Endothelial cell of umbilical vein (primary cell): ENCODE measurements at regions of chr1 and their contacts with region 1.

Region 1: DNA sequence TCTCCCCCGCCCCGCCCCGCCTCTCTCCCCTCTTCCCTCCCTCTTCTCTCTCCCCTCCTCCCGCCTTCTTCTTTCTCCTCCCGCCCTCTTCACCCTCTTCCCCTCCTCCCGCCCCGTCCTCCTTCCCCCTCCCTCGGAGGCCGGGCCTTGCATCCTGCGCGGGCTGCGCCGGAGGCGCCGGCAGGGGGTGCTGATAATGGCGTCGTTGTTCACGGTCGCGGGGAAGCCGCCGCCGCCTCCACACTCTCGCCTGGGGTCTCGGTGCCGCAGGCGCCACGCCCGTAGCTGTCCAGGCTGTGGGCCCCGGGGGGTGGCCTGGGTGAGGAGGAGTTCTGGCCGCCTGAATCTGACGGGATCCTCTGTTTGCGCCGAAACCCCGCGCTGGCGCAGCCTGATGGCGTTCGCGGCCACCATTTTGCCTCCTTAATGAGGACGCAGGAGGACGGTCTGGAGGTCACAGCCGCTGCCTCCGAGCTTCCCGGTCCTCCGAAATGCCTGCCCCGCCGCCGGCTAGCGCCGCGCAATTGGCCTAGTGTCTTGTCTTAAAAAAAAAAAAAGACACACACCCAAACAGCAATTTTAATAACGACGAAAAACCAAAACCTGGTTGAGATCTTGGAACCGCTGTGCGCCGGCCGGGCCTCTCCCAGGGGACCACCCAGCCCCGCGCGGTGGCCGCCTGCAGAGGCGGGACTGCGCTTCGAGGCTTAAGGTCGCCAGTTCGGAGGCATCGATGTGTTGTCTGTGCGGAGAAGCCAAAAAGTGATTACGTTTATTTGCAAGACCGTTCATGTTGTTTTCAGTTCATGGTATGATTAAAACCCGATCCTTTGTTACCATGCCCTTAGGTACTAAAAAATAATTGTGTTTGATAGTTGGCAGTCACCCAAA is 106.6 kb upstream of the HNRNPU start:
- DNase-seq: peak; percentile 94
- H3K4me3 ChIP-seq: peak overlapping the region; percentile 37 to 86 (median 80)
- H3K27ac ChIP-seq: peak overlapping the region; percentile 96
- H3K4me1 ChIP-seq: peaks cover 15% of the 10 kb centered on the region
- H3K27me3 ChIP-seq: no peaks in the 10 kb centered on the region
- CTCF ChIP-seq: peak; percentile 47 to 77
- POLR2A ChIP-seq: peak; percentile 86

Region 2: GRCh38 chr1:244896550-244896949 is 74.4 kb before region 1 on chr1:
- CTCF ChIA-PET with region 1: no interaction called
- POLR2A ChIA-PET with region 1: no interaction called
- dilution Hi-C with region 1: no loop called
- intact Hi-C with region 1: loop called (anchors 2 kb)
- DNase-seq: peak; percentile 86
- H3K4me3 ChIP-seq: no peak overlapping the region
- H3K27ac ChIP-seq: peak overlapping the region; percentile 57
- H3K4me1 ChIP-seq: peaks cover 6% of the 10 kb centered on the region
- H3K27me3 ChIP-seq: no peaks in the 10 kb centered on the region
- CTCF ChIP-seq: no peak
- POLR2A ChIP-seq: no peak

Region 3: DNA sequence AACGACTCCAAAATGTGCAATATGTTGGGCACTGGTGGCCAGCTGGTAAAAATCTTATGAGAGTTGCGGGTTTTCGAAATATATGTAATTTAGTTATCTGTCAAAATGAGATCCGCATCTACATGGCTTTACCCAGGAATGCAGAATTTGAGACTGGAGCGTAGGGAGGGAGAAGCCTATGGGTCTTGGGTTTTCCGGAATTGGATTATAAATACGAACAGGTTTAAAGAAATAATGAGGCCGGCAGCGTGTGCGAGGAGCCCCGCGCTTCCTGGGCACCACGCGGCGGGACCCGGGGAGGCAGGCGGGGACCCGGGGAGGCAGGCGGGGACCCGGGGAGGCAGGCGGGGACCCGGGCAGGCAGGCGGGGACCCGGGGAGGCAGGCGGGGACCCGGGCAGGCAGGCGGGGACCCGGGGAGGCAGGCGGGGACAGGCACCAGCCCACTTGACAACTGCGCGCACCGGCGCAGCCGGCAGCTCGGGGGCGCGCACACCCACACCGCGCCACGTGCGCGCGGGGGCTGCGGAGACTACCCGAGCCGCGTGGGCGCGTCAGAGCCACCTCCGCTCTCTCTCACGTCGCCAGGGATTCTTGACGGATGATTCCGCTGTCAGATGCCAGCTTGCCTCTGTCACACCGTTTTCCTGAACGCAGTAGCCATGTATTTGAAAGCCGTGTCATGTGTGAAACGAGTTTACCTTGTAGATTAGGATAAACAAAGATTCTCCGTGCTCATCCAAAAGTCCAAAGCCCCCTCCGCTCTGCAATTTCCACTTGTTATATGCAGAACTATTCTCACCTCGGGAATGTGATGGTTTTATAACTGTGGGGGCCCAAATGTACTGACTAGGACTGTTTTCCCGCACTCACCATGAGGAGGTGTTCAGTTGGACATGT is 52.2 kb before region 1 on chr1:
- CTCF ChIA-PET with region 1: interaction called, 3 read pairs
- POLR2A ChIA-PET with region 1: no interaction called
- dilution Hi-C with region 1: no loop called
- intact Hi-C with region 1: loop called (anchors 2 kb)
- DNase-seq: peak; percentile 38
- H3K4me3 ChIP-seq: peak overlapping the region; percentile 52 to 64 (median 63)
- H3K27ac ChIP-seq: no peak overlapping the region
- H3K4me1 ChIP-seq: peaks cover 12% of the 10 kb centered on the region
- H3K27me3 ChIP-seq: no peaks in the 10 kb centered on the region
- CTCF ChIP-seq: no peak
- POLR2A ChIP-seq: no peak

Region 4: DNA sequence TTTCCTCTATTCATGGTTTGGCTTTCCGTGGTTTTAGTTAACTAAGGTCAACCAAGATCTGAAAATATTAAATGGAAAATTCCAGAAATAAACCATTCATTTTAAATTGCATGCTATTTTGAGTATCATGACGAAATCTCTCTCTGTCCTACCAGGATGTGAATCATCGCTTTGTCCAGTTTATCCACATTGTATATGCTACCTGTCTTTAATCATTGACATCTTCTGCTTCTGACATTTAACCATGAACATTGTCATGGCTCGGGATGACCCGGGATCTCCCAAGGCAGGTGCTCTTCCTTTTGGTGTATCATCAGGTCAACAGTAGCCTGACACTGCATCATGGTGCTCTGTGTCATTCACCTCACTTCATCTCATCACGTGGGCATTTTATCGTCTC is 18.9 kb after region 1 on chr1:
- CTCF ChIA-PET with region 1: interaction called, 6 read pairs
- POLR2A ChIA-PET with region 1: no interaction called
- dilution Hi-C with region 1: no loop called
- intact Hi-C with region 1: loop called (anchors 1 kb)
- DNase-seq: peak; percentile 35
- H3K4me3 ChIP-seq: no peak overlapping the region
- H3K27ac ChIP-seq: peak overlapping the region; percentile 34
- H3K4me1 ChIP-seq: peaks cover 24% of the 10 kb centered on the region
- H3K27me3 ChIP-seq: no peaks in the 10 kb centered on the region
- CTCF ChIP-seq: no peak
- POLR2A ChIP-seq: no peak

Region 5: DNA sequence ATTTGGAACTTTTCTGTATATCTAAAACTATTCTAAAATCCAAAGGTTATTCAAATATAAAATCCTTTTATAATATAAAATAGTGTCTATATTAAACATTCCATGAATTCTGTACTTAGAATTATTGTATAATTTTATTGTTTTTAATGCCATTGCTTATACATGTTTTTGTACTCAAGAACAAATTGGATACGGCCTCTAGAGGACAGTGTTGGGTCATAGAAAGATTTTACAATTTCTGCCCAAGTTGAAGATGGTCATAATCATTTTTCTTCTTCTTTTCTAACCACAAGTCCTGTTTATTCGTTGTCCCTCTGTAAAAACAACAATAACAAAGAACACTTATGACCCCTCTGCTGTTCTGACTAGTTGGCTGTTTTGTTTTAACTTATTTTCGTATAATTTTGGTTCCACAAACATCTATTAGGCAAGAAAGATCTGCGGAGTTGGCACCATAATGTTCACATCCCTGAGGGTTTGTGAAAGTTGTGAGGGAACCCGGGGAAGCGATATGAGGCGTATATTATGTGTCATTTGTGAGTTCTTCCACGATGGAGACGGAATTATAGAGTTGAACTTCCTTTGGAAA is 108.2 kb after region 1 on chr1:
- CTCF ChIA-PET with region 1: no interaction called
- POLR2A ChIA-PET with region 1: no interaction called
- dilution Hi-C with region 1: no loop called
- intact Hi-C with region 1: no loop called
- DNase-seq: peak; percentile 80
- H3K4me3 ChIP-seq: no peak overlapping the region
- H3K27ac ChIP-seq: no peak overlapping the region
- H3K4me1 ChIP-seq: no peaks in the 10 kb centered on the region
- H3K27me3 ChIP-seq: no peaks in the 10 kb centered on the region
- CTCF ChIP-seq: peak; percentile 36 to 58
- POLR2A ChIP-seq: no peak

Region 6: DNA sequence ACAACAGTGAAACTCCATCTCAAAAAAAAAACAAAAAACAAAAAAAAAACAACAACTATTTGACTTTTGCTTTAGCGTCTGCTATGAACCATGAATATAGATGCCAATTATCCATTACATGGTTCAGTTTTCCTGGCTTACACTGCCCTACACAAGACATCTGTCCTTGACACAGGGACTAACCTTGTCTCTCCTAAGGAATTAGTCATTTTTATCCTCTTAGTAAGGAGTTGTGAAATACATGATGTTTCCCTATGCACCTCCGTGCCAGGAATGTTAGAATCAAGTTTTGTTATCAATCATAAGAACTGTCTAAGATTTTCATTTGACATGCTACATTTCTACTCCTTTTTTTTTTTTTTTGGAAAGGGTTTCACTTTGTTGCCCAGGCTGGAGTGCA is 425.7 kb after region 1 on chr1:
- CTCF ChIA-PET with region 1: no interaction called
- POLR2A ChIA-PET with region 1: no interaction called
- dilution Hi-C with region 1: no loop called
- intact Hi-C with region 1: no loop called
- DNase-seq: no peak
- H3K4me3 ChIP-seq: no peak overlapping the region
- H3K27ac ChIP-seq: no peak overlapping the region
- H3K4me1 ChIP-seq: no peaks in the 10 kb centered on the region
- H3K27me3 ChIP-seq: no peaks in the 10 kb centered on the region
- CTCF ChIP-seq: no peak
- POLR2A ChIP-seq: no peak